MCF 10A (cell line): ENCODE measurements at regions of chr17 and their contacts with region 1.

Region 1: DNA sequence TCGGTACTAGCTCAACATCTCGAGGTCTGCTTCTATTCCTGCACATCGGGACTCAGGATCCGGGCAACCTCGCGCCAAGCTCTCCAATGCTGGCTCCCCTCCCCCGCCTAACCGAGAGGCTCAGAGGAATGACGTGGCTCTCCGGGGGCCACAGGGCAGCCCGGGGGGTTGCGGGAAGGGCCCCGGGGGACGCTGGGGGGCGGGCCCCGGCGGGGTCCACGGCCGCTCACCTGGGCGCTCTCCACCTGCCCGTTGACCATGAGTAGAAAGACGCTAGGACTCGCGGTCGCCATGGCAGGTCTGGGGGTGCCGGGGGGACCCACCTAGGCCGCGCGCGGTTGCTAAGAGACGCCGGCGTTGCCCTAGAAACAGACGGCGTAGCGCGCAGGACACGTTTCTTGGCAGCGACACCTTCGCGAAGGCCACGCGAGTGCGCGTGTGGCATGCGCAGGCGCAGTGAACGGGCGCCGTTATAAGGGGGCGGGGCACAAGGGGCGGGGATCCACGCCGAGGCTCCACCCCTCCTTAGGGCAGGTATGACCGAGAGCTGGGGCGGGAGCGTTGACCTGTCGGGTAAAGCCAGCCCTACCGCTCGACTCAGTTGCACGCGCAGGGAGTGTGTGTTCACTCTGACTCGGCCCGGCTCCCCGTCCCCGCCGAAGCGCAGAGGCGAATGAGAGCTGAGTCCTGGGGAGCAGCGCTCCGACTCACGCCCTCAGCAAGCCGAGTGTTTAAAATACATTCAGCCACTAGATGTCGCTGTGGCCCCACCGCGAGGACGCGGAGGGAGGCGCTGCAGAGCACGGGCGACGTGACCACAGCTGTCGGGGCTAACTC is at the start of gene B9D1:
- DNase-seq: peak; percentile 90
- H3K4me3 Mint-ChIP-seq: peak within 1 kb of the TSS; percentile 78
- H3K27ac Mint-ChIP-seq: peak within 1 kb of the TSS; percentile 89
- H3K4me1 Mint-ChIP-seq: peaks cover 14% of the 10 kb centered on the region
- H3K27me3 Mint-ChIP-seq: no peaks in the 10 kb centered on the region
- CTCF ChIP-seq: peak; percentile 97
- total RNA-seq, gene B9D1: 30.4 and 33.0 TPM in 2 replicates

Region 2: DNA sequence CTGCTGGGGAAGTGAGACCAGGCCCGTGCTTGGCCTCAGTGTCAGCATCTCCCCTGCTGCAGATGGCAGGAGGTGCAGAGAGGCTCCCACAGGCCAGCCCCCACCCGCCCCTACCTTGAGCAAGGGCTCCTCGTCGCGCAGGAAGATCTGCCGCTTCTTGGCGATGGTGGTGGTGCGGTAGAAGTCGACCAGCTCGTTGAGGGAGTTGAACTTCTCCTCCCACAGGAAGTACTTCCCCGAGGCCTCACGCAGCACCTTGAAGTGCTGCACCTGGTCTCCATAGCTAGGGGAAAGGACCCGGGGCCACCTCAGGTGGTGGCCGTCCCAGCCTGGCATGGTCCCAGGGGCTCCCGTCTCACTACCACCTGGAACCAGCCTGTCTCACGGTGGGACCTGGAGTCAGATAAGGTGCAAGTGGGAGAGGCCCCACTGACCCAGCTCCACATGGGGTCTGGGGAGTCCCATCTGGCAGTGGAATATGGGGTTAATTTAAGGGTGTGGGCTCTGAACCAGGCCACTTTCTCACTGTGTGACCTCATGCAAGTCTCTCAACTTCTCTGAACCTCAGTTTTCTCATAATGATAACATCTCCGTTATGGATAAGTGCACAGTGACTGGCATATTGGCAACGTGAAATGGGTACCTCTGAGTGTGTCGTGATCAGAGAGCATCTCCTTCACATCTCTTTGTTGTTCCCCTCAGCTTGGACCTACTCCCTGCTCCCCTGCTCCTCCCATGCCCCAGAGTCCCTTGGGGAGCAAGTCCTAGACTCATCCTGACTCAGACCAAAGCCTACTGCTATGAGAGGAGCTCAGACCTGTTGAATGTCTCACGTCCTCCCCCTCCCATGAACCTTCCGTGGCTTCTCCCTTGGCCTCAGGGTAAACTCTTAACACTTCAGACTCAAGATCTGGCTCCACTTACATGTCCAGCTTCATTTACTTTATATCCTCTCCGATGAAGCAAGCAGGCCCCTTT is 338.1 kb before region 1 on chr17:
- CTCF ChIA-PET with region 1: no interaction called
- POLR2A ChIA-PET with region 1: no interaction called
- intact Hi-C with region 1: no loop called
- DNase-seq: peak; percentile 30
- H3K4me3 Mint-ChIP-seq: no peak overlapping the region
- H3K27ac Mint-ChIP-seq: no peak overlapping the region
- H3K4me1 Mint-ChIP-seq: no peaks in the 10 kb centered on the region
- H3K27me3 Mint-ChIP-seq: no peaks in the 10 kb centered on the region
- CTCF ChIP-seq: no peak

Region 3: GRCh38 chr17:19284005-19284959 is 78.2 kb before region 1 on chr17:
- CTCF ChIA-PET with region 1: no interaction called
- POLR2A ChIA-PET with region 1: no interaction called
- intact Hi-C with region 1: no loop called
- DNase-seq: no peak
- H3K4me3 Mint-ChIP-seq: no peak overlapping the region
- H3K27ac Mint-ChIP-seq: no peak overlapping the region
- H3K4me1 Mint-ChIP-seq: peaks cover 10% of the 10 kb centered on the region
- H3K27me3 Mint-ChIP-seq: no peaks in the 10 kb centered on the region
- CTCF ChIP-seq: no peak

Region 4: GRCh38 chr17:19377602-19378392 is 15.3 kb after region 1 on chr17:
- CTCF ChIA-PET with region 1: interaction called, 36 read pairs
- POLR2A ChIA-PET with region 1: interaction called, 22 read pairs
- intact Hi-C with region 1: no loop called
- DNase-seq: peak; percentile 98
- H3K4me3 Mint-ChIP-seq: peak overlapping the region; percentile 94
- H3K27ac Mint-ChIP-seq: peak overlapping the region; percentile 99
- H3K4me1 Mint-ChIP-seq: peaks cover 16% of the 10 kb centered on the region
- H3K27me3 Mint-ChIP-seq: no peaks in the 10 kb centered on the region
- CTCF ChIP-seq: no peak

Region 5: GRCh38 chr17:19433727-19434340 is 71.3 kb after region 1 on chr17:
- CTCF ChIA-PET with region 1: interaction called, 10 read pairs
- POLR2A ChIA-PET with region 1: interaction called, 4 read pairs
- intact Hi-C with region 1: no loop called
- DNase-seq: no peak
- H3K4me3 Mint-ChIP-seq: no peak overlapping the region
- H3K27ac Mint-ChIP-seq: no peak overlapping the region
- H3K4me1 Mint-ChIP-seq: no peaks in the 10 kb centered on the region
- H3K27me3 Mint-ChIP-seq: no peaks in the 10 kb centered on the region
- CTCF ChIP-seq: no peak

Region 6: GRCh38 chr17:19507775-19508576 is 145.5 kb after region 1 on chr17:
- CTCF ChIA-PET with region 1: interaction called, 4 read pairs
- POLR2A ChIA-PET with region 1: no interaction called
- intact Hi-C with region 1: loop called (anchors 1 kb)
- DNase-seq: peak; percentile 87
- H3K4me3 Mint-ChIP-seq: peak overlapping the region; percentile 85
- H3K27ac Mint-ChIP-seq: peak overlapping the region; percentile 91
- H3K4me1 Mint-ChIP-seq: no peaks in the 10 kb centered on the region
- H3K27me3 Mint-ChIP-seq: no peaks in the 10 kb centered on the region
- CTCF ChIP-seq: no peak

Region 7: DNA sequence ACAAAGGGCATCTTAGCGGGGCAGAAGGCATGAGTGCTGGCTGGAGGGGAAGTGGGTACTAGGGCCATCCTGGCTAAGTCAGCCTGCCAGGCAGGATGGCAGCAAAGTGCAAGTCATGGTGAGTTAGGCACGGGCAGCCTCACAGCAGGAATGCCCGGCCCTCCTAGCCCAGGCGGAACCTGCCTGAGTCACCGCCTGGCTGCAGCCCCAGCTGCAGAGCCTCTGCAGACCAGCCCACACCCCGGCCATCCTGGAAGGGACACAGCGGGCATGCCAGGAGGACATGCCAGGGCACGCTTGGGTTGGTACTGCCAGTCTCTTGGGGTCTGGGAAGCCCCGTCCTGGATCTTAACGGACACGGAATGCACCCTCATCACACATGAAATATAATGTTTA is 390.6 kb after region 1 on chr17:
- CTCF ChIA-PET with region 1: interaction called, 11 read pairs
- POLR2A ChIA-PET with region 1: no interaction called
- intact Hi-C with region 1: no loop called
- DNase-seq: peak; percentile 97
- H3K4me3 Mint-ChIP-seq: peak overlapping the region; percentile 9
- H3K27ac Mint-ChIP-seq: peak overlapping the region; percentile 79
- H3K4me1 Mint-ChIP-seq: peaks cover 56% of the 10 kb centered on the region
- H3K27me3 Mint-ChIP-seq: no peaks in the 10 kb centered on the region
- CTCF ChIP-seq: no peak